ENCODE measurements at regions of chr3 and their contacts with region 1.

Region 1: GRCh38 chr3:172341482-172342059 is 106.7 kb downstream of the GHSR start:
- DNase-seq: no peak
- H3K4me3 Mint-ChIP-seq: no peak overlapping the region
- H3K27ac Mint-ChIP-seq: no peak overlapping the region
- H3K4me1 Mint-ChIP-seq: no peaks in the 10 kb centered on the region
- H3K27me3 Mint-ChIP-seq: no peaks in the 10 kb centered on the region

Region 2: GRCh38 chr3:171772427-171773056 is 569.0 kb before region 1 on chr3:
- CTCF ChIA-PET with region 1: interaction called, 14 read pairs
- POLR2A ChIA-PET with region 1: interaction called, 3 read pairs
- DNase-seq: peak; percentile 49
- H3K4me3 Mint-ChIP-seq: no peak overlapping the region
- H3K27ac Mint-ChIP-seq: no peak overlapping the region
- H3K4me1 Mint-ChIP-seq: peaks cover 2% of the 10 kb centered on the region
- H3K27me3 Mint-ChIP-seq: peaks cover 9% of the 10 kb centered on the region

Region 3: DNA sequence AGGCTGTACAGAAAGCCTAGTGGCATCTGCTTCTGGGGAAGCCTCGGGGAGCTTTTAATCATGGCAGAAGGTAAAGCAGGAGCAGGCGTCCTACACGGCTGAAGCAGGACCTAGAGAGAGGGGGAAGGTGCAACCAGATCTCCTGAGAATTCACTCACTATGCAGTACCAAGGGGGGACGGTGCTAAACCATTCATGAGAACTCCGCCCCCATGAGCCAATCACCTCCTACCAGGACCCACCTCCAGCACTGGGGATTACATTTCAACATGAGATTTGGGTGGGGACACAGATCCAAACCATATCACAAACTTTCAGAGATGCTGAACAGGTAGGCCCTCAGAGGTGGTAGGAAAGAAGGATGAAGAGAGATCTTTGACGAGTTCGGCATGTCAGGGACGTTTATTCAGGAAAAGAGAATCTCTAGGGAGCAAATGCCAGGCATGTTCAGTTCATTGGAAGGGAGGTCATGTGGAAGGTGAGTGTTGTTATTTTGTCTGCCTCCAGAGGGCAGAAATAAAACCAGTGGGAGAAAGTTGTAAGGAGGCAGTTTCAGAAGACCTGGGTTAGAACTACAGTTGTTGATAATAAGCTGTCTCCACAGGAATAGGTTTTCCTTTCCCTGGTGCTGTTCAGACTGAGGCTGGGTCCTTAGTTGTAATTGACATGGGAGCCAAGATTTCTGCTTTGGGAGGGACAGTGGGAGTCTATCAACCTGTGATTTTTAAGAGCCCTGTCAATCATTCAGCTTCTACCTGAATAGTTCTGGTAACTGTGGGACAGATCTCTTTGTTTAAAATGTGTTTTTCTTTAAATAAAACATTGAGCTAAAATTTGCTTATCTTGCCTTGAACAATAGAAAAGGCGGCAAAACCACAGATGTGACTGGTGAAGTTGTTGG is 306.5 kb before region 1 on chr3:
- CTCF ChIA-PET with region 1: interaction called, 25 read pairs
- POLR2A ChIA-PET with region 1: no interaction called
- DNase-seq: no peak
- H3K4me3 Mint-ChIP-seq: no peak overlapping the region
- H3K27ac Mint-ChIP-seq: no peak overlapping the region
- H3K4me1 Mint-ChIP-seq: peaks cover 31% of the 10 kb centered on the region
- H3K27me3 Mint-ChIP-seq: no peaks in the 10 kb centered on the region

Region 4: DNA sequence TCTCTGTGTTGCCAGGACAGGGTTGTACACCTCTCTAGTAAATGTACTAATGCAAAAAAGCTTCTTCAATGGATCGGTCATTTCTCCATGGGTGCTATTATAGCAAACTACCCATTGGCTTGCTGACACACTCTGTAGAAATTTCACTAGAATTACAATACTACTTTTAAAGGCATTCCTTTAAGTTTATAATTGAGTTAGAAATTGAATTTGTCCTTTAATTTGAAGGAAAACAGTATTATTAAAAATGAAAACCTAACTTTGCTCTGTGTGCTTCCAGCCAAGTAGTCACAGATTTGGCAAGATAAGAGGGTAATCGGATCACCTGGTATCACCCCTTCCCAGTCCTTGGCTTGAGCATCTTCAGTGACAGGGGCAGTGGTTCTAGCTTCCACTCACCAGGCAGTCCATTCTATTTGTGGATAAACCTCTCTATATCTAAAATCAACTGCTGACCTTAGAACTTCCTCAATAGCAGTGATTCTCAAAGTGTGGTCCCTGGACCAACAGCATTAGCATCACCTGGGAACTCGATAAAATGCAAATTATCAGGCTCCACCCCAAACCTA is 13.4 kb after region 1 on chr3:
- CTCF ChIA-PET with region 1: interaction called, 16 read pairs
- POLR2A ChIA-PET with region 1: no interaction called
- DNase-seq: no peak
- H3K4me3 Mint-ChIP-seq: no peak overlapping the region
- H3K27ac Mint-ChIP-seq: no peak overlapping the region
- H3K4me1 Mint-ChIP-seq: peaks cover 6% of the 10 kb centered on the region
- H3K27me3 Mint-ChIP-seq: no peaks in the 10 kb centered on the region